Aorta (tissue), 5 donors: ENCODE measurements at regions of chr17 and their contacts with region 1.

Region 1: GRCh38 chr17:74748529-74749365 is at the start of gene NHERF1:
- DNase-seq: peak; percentile 96 to 98
- ATAC-seq: peak; percentile 95
- H3K4me3 ChIP-seq: peak within 1 kb of the TSS; percentile 73 to 82
- H3K27ac ChIP-seq: peak within 1 kb of the TSS in 1 of 2 donors; percentile 53
- H3K4me1 ChIP-seq: no peaks in the 10 kb centered on the region
- H3K27me3 ChIP-seq: no peaks in the 10 kb centered on the region
- total RNA-seq, gene NHERF1: 17.6 to 21.1 TPM

Region 2: DNA sequence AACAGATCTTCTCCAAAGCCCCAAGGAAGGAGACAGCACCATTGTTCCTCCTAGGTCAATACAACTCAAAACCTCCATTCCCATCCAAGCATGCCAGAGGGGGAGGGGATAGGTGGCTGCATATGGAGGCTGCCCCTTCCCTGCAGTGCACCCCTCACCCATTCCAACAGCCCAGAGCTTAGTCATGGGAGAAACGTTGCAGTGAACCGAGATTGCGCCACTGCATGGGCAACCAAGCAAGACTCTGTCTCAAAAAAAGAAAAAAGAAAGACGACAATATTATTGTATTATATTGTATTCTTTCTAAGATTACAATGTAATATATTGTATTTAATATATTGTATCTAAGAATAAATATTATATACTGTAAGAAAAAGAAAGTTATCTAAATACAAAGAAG is 88.8 kb before region 1 on chr17:
- intact Hi-C with region 1: no loop called
- DNase-seq: no peak
- ATAC-seq: no peak
- H3K4me3 ChIP-seq: no peak overlapping the region
- H3K27ac ChIP-seq: no peak overlapping the region
- H3K4me1 ChIP-seq: no peaks in the 10 kb centered on the region
- H3K27me3 ChIP-seq: no peaks in the 10 kb centered on the region

Region 3: GRCh38 chr17:74768069-74768762 is 19.5 kb after region 1 on chr17:
- intact Hi-C with region 1: loop called (anchors 2 kb)
- DNase-seq: peak; percentile 88 to 94
- ATAC-seq: peak; percentile 44
- H3K4me3 ChIP-seq: no peak overlapping the region
- H3K27ac ChIP-seq: peak overlapping the region; percentile 31 to 55
- H3K4me1 ChIP-seq: no peaks in the 10 kb centered on the region
- H3K27me3 ChIP-seq: no peaks in the 10 kb centered on the region

Region 4: DNA sequence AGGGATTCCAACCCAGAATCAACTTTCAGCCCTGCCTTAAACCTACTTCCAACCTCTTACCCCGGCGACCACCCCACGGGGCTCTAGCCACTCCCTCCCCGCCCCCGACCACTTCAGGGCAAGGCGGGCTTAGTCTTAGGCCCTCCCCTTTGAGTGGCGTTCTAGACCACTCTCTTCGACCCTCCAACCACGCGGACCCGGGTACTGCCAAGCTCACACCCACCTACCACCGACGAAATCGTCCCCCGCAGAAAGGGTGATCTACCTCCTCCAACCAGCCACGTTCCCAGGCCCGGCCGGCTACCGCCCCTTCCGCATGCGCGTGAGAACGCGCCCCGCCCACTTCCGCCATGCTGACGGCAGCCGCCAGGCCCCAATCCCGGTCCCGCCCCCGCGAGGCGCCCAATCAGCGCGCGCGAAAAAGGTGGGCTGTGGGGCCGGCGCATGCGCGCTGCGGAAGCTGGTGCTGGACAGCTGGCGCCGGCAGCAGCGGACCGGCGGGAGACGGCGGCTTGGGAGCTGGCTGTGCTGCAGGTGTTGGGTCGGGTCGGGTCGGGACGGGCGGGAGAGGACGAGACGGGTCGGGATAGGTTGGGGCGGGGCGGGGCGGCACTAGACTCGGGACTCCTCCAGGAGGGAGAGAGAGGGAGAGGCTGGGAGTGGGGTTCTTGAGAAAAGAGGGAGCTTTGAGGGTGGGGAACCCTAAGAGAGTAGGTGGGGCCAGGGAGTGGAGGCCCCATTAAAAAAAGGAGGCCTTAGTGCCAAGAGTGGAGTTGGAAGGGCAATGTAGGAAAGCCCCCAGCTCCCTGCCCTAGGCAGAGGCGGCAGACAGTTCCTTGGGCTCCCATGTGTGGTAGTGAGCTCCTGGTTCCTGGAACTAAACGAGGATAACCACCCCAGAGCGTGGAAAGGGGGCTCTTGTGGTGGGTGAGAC is 27.6 kb after region 1 on chr17 and contains the start of gene NAT9:
- intact Hi-C with region 1: loop called (anchors 5 kb)
- DNase-seq: peak; percentile 99 to 100
- ATAC-seq: peak; percentile 98
- H3K4me3 ChIP-seq: peak within 1 kb of the TSS; percentile 69 to 71
- H3K27ac ChIP-seq: no peak within 1 kb of the TSS
- H3K4me1 ChIP-seq: no peaks in the 10 kb centered on the region
- H3K27me3 ChIP-seq: no peaks in the 10 kb centered on the region
- total RNA-seq, gene NAT9: 44.5 to 46.3 TPM